ENCODE measurements at regions of chr13 and their contacts with region 1.

Region 1: DNA sequence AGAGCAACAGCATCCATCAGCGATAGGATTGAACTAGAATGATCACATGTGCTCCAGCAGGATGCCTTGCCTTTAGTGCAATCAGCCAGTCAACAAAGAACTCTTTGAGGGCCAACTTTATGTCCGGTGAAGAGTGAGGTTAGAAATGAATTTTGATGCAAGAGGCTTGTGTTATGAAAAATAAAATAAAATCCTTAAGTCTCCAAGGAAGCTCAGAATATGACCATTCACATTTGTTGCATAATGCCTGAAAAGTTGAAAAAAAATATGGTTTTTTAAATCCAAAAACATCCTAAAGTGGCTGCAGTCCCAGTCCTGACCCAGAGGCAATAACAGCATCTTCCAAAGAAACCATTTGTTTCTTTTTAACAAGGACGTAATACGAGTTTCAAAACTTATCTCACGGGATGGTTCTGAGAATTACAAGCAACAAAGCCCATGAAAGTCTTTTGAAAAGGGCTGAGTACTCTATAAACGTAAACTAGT is 61.3 kb downstream of the DCLK1 start:
- DNase-seq: no peak
- ATAC-seq: peak; percentile 86

Region 2: DNA sequence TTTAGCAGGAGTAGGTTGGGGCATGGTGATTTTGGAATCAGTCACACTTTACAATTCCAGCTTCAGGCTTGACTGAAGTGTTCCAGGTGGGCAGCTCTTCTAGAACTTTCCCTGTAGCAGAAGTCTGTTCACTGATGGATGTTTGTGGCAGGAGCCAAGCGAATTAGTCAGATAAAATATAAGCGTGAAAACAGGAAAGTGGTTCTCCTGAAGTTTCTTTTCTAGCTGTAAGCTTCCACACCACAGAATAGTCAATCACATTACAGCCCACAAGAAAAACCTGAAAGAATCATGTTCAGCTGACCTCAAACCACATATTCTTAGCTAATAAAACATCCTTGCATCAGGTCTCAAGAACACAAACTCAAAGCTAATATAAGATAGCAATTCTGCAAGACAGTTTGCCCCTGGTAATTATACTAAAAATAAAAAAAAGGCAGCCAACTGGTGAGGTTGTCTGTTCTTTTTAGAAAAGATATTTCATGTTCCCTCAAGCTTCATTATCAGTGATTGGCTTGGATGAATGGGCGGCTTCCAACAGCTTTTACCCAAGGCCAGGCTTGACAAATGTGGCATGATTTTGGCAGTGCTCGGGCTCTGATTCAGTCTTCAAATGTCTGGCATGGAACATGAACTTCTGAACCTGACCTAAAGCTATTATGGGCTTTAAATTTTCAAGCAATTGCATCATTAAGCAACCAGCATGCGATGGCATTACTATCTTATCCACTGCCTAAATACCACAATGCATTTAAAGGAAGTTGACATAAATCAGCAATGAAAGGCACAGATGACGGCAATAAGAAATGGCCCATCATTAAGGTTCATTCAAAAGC is 75.6 kb before region 1 on chr13:
- intact Hi-C with region 1: loop called (anchors 10 kb)
- DNase-seq: peak; percentile 58
- ATAC-seq: peak; percentile 92

Region 3: DNA sequence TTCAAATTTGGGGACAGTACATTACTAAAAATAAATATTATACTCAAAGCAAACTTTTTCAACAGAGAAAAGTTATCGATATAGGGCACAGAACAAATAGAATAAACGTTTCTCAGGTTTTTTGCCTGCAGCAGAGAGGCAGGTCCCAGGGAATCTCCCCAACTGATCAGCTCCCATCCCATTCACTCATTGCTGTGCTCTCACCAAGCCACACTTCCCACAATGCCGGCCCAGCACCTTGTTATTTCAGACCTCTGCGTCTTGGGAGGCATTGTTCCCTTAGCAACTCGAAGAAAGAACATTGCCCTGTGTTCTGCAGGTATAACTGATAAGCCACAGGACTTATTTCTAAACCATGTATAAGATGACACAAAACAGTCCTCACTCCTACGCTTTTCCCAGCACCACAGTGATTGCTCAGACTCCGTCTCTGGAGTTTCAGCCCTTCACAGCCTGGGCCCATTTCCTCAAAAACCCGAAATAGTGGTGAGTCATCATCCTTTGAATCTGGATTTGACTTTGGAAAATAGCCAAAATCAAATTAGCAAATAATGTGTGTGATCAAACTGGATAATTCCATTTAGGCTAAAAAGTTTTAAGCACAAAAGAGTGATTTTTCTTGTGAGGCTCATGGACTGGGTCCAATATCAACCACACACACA is 39.1 kb before region 1 on chr13:
- intact Hi-C with region 1: no loop called
- DNase-seq: no peak
- ATAC-seq: peak; percentile 57

Measured in Right ventricle myocardium superior (tissue), 1 donor.